MCF 10A (cell line): ENCODE measurements at regions of chr19 and their contacts with region 1.

Region 1: GRCh38 chr19:13155472-13156359 is 5.5 kb downstream of the IER2 start:
- DNase-seq: peak; percentile 78
- H3K4me3 Mint-ChIP-seq: peak overlapping the region; percentile 82
- H3K27ac Mint-ChIP-seq: peak overlapping the region; percentile 92
- H3K4me1 Mint-ChIP-seq: no peaks in the 10 kb centered on the region
- H3K27me3 Mint-ChIP-seq: no peaks in the 10 kb centered on the region
- CTCF ChIP-seq: no peak

Region 2: DNA sequence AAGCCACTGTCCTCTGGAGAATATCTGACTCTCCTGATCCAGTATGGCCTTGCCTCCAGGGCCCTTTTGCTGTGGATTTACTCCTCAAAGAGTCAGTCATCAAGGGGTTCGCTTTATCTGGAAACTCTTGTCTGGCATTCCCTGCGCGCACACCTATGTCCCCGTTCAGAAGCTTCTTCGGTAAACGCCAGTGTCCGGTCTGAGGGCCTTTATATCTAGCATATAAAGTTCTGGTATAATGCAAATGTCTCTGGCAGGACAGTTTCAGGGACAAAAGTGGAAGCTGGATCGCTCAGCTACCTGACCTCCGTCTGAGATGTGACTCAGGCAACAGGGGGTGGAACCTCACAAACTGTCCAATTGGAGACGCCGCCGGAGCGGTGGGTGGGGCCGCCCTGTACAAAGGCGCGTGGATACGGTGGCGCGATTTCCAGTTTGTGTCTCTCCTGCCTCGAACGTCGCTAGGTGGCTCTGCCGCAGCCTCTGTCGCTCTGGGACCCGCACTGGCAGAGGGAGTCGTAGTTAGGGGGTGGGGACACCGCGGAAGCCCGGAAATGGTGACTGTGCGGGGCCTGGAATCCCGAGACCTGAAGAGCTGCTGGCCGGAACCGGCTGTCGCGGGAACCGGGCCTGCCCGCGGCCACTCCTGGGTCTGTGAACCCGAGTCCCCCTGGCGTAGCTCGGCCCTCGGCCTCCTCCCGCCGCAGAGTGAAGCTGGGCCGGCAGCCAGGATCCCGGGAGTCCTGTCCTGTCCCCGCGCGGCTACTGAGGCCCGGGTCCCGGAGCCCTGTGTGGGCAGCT is 660.5 kb before region 1 on chr19:
- CTCF ChIA-PET with region 1: no interaction called
- POLR2A ChIA-PET with region 1: no interaction called
- intact Hi-C with region 1: no loop called
- DNase-seq: peak; percentile 70
- H3K4me3 Mint-ChIP-seq: peak overlapping the region; percentile 71
- H3K27ac Mint-ChIP-seq: peak overlapping the region; percentile 23
- H3K4me1 Mint-ChIP-seq: no peaks in the 10 kb centered on the region
- H3K27me3 Mint-ChIP-seq: no peaks in the 10 kb centered on the region
- CTCF ChIP-seq: no peak

Region 3: GRCh38 chr19:13117772-13118423 is 37.8 kb before region 1 on chr19 and contains the start of gene NACC1:
- CTCF ChIA-PET with region 1: no interaction called
- POLR2A ChIA-PET with region 1: interaction called, 61 read pairs
- intact Hi-C with region 1: loop called (anchors 2 kb)
- DNase-seq: peak; percentile 90
- H3K4me3 Mint-ChIP-seq: peak within 1 kb of the TSS; percentile 98
- H3K27ac Mint-ChIP-seq: peak within 1 kb of the TSS; percentile 98
- H3K4me1 Mint-ChIP-seq: peaks cover 30% of the 10 kb centered on the region
- H3K27me3 Mint-ChIP-seq: no peaks in the 10 kb centered on the region
- CTCF ChIP-seq: no peak
- total RNA-seq, gene NACC1: 55.9 and 67.3 TPM in 2 replicates

Region 4: GRCh38 chr19:13195678-13196077 is 40.0 kb after region 1 on chr19:
- CTCF ChIA-PET with region 1: interaction called, 6 read pairs
- POLR2A ChIA-PET with region 1: interaction called, 4 read pairs
- intact Hi-C with region 1: loop called (anchors 1 kb)
- DNase-seq: peak; percentile 43
- H3K4me3 Mint-ChIP-seq: no peak overlapping the region
- H3K27ac Mint-ChIP-seq: no peak overlapping the region
- H3K4me1 Mint-ChIP-seq: no peaks in the 10 kb centered on the region
- H3K27me3 Mint-ChIP-seq: no peaks in the 10 kb centered on the region
- CTCF ChIP-seq: no peak

Region 5: DNA sequence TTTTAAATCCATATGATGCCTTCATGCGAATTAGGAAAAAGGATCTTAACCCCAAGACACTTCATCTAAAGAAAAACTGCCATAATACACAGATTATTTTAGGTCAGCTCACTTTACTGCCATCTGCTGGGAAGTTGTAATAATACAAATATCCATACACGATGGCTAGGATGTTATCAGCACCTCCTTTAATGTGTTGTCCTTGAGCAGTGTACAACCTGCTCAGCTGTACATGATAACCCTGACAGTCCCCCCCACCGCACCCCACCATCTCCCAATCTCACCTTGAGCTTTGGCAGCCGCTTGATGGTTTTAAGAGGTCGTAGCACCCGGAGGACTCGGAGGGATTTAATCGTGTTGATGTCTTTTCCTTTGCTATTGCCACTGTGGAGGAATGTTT is 106.7 kb after region 1 on chr19:
- CTCF ChIA-PET with region 1: interaction called, 10 read pairs
- POLR2A ChIA-PET with region 1: interaction called, 12 read pairs
- intact Hi-C with region 1: loop called (anchors 1 kb)
- DNase-seq: peak; percentile 64
- H3K4me3 Mint-ChIP-seq: no peak overlapping the region
- H3K27ac Mint-ChIP-seq: no peak overlapping the region
- H3K4me1 Mint-ChIP-seq: peaks cover 11% of the 10 kb centered on the region
- H3K27me3 Mint-ChIP-seq: peaks cover 30% of the 10 kb centered on the region
- CTCF ChIP-seq: peak; percentile 54